ENCODE measurements at regions of chr15 and their contacts with region 1.

Region 1: GRCh38 chr15:39686000-39686613 is 96.5 kb downstream of the FSIP1 start:
- DNase-seq: no peak
- H3K4me3 Mint-ChIP-seq: no peak overlapping the region
- H3K27ac Mint-ChIP-seq: no peak overlapping the region
- H3K4me1 Mint-ChIP-seq: peaks cover 13% of the 10 kb centered on the region
- H3K27me3 Mint-ChIP-seq: peaks cover 14% of the 10 kb centered on the region

Region 2: GRCh38 chr15:39054128-39054732 is 631.9 kb before region 1 on chr15:
- intact Hi-C with region 1: no loop called
- DNase-seq: no peak
- H3K4me3 Mint-ChIP-seq: no peak overlapping the region
- H3K27ac Mint-ChIP-seq: no peak overlapping the region
- H3K4me1 Mint-ChIP-seq: no peaks in the 10 kb centered on the region
- H3K27me3 Mint-ChIP-seq: peaks cover 4% of the 10 kb centered on the region

Region 3: GRCh38 chr15:39287322-39288195 is 398.5 kb before region 1 on chr15:
- intact Hi-C with region 1: no loop called
- DNase-seq: no peak
- H3K4me3 Mint-ChIP-seq: no peak overlapping the region
- H3K27ac Mint-ChIP-seq: no peak overlapping the region
- H3K4me1 Mint-ChIP-seq: no peaks in the 10 kb centered on the region
- H3K27me3 Mint-ChIP-seq: peaks cover 8% of the 10 kb centered on the region

Region 4: DNA sequence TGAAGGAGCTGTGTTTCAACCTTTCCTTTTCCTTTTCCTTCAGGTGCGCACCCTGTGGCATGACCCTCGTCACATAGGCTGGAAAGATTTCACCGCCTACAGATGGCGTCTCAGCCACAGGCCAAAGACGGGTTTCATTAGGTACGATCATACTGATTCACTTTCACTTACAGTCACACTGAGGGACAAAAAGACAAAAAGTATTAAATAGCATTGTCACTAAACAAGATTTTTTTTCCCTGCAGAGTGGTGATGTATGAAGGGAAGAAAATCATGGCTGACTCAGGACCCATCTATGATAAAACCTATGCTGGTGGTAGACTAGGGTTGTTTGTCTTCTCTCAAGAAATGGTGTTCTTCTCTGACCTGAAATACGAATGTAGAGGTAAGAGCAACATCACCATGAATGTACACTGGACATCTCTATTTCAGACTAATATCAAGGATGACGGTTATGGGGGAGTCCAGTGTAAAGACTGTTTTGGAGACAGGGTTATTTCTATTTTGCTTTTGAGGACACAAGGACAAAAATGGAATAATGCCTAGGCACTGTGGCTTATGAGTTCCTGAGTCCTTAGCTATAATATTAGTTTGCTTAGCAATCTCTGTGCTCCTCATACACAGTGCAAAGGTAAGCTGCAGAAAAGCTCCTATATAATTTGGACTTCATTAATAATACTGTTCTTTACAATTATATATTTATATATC is 91.9 kb before region 1 on chr15:
- intact Hi-C with region 1: no loop called
- DNase-seq: no peak
- H3K4me3 Mint-ChIP-seq: no peak overlapping the region
- H3K27ac Mint-ChIP-seq: peak overlapping the region; percentile 75
- H3K4me1 Mint-ChIP-seq: peaks cover 6% of the 10 kb centered on the region
- H3K27me3 Mint-ChIP-seq: peaks cover 14% of the 10 kb centered on the region

Region 5: DNA sequence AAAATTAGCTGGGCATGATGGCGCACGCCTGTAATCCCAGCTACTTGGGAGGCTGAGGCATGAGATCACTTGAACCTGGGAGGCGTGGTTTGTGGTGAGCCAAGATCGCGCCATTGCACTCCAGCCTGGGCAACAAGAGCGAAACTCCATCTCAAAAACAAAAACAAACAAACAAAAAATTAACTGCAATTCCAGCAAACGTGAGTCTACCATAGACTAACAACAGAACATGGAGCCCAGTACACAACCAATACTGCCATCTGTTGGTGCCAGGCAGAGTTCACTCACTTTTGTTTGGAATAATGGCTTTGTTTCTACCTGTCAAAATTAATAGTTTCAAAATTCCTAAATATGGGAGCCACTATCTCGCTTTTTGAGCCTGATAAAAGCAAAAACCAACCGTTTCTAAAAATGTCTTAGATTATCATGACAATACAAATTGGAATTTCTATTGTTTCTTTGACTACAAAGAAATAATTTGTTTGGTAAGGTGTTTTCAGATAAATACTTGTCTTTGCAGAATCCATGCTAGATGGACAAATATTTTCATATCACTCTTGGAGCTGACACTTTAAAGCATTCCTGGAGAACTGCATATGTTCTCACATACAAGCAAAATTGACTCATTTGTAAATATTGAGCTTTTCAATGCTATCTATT is 188.9 kb after region 1 on chr15:
- intact Hi-C with region 1: loop called (anchors 2 kb)
- DNase-seq: no peak
- H3K4me3 Mint-ChIP-seq: no peak overlapping the region
- H3K27ac Mint-ChIP-seq: no peak overlapping the region
- H3K4me1 Mint-ChIP-seq: no peaks in the 10 kb centered on the region
- H3K27me3 Mint-ChIP-seq: peaks cover 12% of the 10 kb centered on the region

Measured in activated T-helper 1 cell treated with anti-CD3 and anti-CD28 coated beads, Interleukin-12 subunit alpha, Interleukin-12 subunit beta, Interleukin-2, Interleukin-4 antibody, amounts not matched to agents 30 ng/mL and 10 ng/mL and 1 ng/mL, durations not matched to agents 14 hours and 24 hours and 36 hours (primary cell).